Sigmoid colon (tissue), 7 donors: ENCODE measurements at regions of chr13 and their contacts with region 1.

Region 1: GRCh38 chr13:102609696-102610095 is 12.9 kb downstream of the TPP2 start:
- DNase-seq: no peak
- H3K4me3 ChIP-seq: no peak overlapping the region
- H3K27ac ChIP-seq: no peak overlapping the region
- H3K4me1 ChIP-seq: no peaks in the 10 kb centered on the region
- H3K27me3 ChIP-seq: no peaks in the 10 kb centered on the region
- CTCF ChIP-seq: no peak
- EP300 ChIP-seq: no peak
- POLR2A ChIP-seq: no peak

Region 2: GRCh38 chr13:102651892-102652291 is 42.2 kb after region 1 on chr13:
- intact Hi-C with region 1: loop called (anchors 5 kb)
- DNase-seq: no peak
- H3K4me3 ChIP-seq: no peak overlapping the region
- H3K27ac ChIP-seq: peak overlapping the region in 1 of 4 donors; percentile 35
- H3K4me1 ChIP-seq: peaks cover 0 to 24% (median 14%) of the 10 kb centered on the region in 4 donors
- H3K27me3 ChIP-seq: no peaks in the 10 kb centered on the region
- CTCF ChIP-seq: no peak
- EP300 ChIP-seq: no peak
- POLR2A ChIP-seq: no peak

Region 3: GRCh38 chr13:103140001-103140671 is 530.4 kb after region 1 on chr13:
- intact Hi-C with region 1: no loop called
- DNase-seq: no peak
- H3K4me3 ChIP-seq: no peak overlapping the region
- H3K27ac ChIP-seq: no peak overlapping the region
- H3K4me1 ChIP-seq: no peaks in the 10 kb centered on the region
- H3K27me3 ChIP-seq: no peaks in the 10 kb centered on the region
- CTCF ChIP-seq: peak in 1 of 4 experiments; percentile 7
- EP300 ChIP-seq: no peak
- POLR2A ChIP-seq: no peak